Sciatic nerve (tissue), 2 donors: ENCODE measurements at regions of chr2 and their contacts with region 1.

Region 1: GRCh38 chr2:68975844-68976243 is 1.4 kb downstream of the GKN1 start:
- DNase-seq: no peak
- ATAC-seq: no peak

Region 2: GRCh38 chr2:68992933-68993332 is 17.1 kb after region 1 on chr2:
- intact Hi-C with region 1: loop called (anchors 1 kb)
- DNase-seq: no peak
- ATAC-seq: no peak